ENCODE measurements at regions of chr9 and their contacts with region 1.

Region 1: GRCh38 chr9:128296337-128297220 is 20.5 kb downstream of the SWI5 start:
- DNase-seq: peak in 1 of 2 experiments; percentile 71
- H3K4me3 ChIP-seq: no peak overlapping the region
- H3K4me3 Mint-ChIP-seq: no peak overlapping the region
- H3K27ac Mint-ChIP-seq: no peak overlapping the region
- H3K4me1 ChIP-seq: peaks cover 29% of the 10 kb centered on the region
- H3K4me1 Mint-ChIP-seq: peaks cover 13% of the 10 kb centered on the region
- H3K27me3 ChIP-seq: no peaks in the 10 kb centered on the region
- H3K27me3 Mint-ChIP-seq: no peaks in the 10 kb centered on the region
- CTCF ChIP-seq: no peak

Region 2: GRCh38 chr9:128339771-128340690 is 43.5 kb after region 1 on chr9 and contains the start of gene SLC27A4:
- CTCF ChIA-PET with region 1: interaction called, 19 read pairs
- POLR2A ChIA-PET with region 1: interaction called, 4 read pairs
- intact Hi-C with region 1: loop called (anchors 1 kb)
- DNase-seq: peak; percentile 92
- H3K4me3 ChIP-seq: peak within 1 kb of the TSS; percentile 91
- H3K4me3 Mint-ChIP-seq: peak within 1 kb of the TSS; percentile 81
- H3K27ac Mint-ChIP-seq: peak within 1 kb of the TSS; percentile 94
- H3K4me1 ChIP-seq: no peaks in the 10 kb centered on the region
- H3K4me1 Mint-ChIP-seq: no peaks in the 10 kb centered on the region
- H3K27me3 ChIP-seq: no peaks in the 10 kb centered on the region
- H3K27me3 Mint-ChIP-seq: no peaks in the 10 kb centered on the region
- CTCF ChIP-seq: no peak
- total RNA-seq, gene SLC27A4: 21.1 and 22.8 TPM in 2 replicates

Region 3: GRCh38 chr9:128370826-128371621 is 74.4 kb after region 1 on chr9 and contains the start of gene URM1:
- CTCF ChIA-PET with region 1: interaction called, 10 read pairs
- POLR2A ChIA-PET with region 1: no interaction called
- intact Hi-C with region 1: no loop called
- DNase-seq: peak; percentile 93 to 94
- H3K4me3 ChIP-seq: peak within 1 kb of the TSS; percentile 100
- H3K4me3 Mint-ChIP-seq: peak within 1 kb of the TSS; percentile 79
- H3K27ac Mint-ChIP-seq: peak within 1 kb of the TSS; percentile 71
- H3K4me1 ChIP-seq: peaks cover 12% of the 10 kb centered on the region; the same call in 1 of the 2 replicates
- H3K4me1 Mint-ChIP-seq: peaks cover 14% of the 10 kb centered on the region
- H3K27me3 ChIP-seq: no peaks in the 10 kb centered on the region
- H3K27me3 Mint-ChIP-seq: no peaks in the 10 kb centered on the region
- CTCF ChIP-seq: no peak
- total RNA-seq, gene URM1: 55.9 and 62.7 TPM in 2 replicates

Region 4: DNA sequence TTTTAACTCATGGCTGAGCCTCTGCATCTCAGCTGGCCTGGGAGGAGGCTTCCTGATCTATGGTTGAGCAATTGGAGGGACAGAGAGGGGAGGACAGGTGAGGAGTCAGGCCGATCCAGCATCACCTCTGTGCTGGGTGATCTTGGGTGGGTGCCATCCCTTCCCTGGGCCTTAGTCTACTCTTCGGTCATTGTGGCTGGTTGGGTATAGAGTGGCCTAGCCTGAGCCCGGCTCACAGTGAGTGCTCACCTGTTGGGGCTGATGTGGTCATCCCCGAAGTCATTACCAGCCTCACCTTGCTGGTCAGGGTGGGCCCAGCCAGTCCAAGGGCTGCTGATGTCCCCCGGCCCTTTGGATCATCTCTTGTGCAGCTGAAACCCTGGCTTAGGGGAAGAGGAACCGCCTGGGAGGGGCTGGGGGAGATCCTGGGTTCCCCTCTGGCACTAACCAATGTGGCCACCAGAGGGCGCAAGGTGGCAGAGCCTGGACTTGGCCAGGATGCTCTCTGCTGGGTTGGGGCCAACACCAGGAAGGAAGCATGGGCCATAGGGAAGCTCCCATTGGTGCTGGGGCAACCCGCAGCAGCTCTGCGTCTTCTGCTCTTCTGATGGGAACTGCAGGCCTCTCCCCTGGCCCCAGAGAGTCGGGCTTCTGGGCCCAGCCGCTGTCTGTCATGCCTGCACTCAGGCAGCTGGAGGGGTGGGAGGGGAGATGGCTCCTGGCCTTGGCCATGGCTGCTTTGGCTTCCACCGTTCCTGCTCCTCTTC is 141.9 kb after region 1 on chr9:
- CTCF ChIA-PET with region 1: no interaction called
- POLR2A ChIA-PET with region 1: no interaction called
- intact Hi-C with region 1: loop called (anchors 1 kb)
- DNase-seq: peak; percentile 82 to 88
- H3K4me3 ChIP-seq: no peak overlapping the region
- H3K4me3 Mint-ChIP-seq: no peak overlapping the region
- H3K27ac Mint-ChIP-seq: no peak overlapping the region
- H3K4me1 ChIP-seq: no peaks in the 10 kb centered on the region
- H3K4me1 Mint-ChIP-seq: no peaks in the 10 kb centered on the region
- H3K27me3 ChIP-seq: no peaks in the 10 kb centered on the region
- H3K27me3 Mint-ChIP-seq: no peaks in the 10 kb centered on the region
- CTCF ChIP-seq: peak; percentile 93 to 94

Measured in Caco-2 (cell line).